Activated CD4-positive, alpha-beta T cell treated with anti-CD3 and anti-CD28 coated beads for 36 hours (primary cell): ENCODE measurements at regions of chr20 and their contacts with region 1.

Region 1: DNA sequence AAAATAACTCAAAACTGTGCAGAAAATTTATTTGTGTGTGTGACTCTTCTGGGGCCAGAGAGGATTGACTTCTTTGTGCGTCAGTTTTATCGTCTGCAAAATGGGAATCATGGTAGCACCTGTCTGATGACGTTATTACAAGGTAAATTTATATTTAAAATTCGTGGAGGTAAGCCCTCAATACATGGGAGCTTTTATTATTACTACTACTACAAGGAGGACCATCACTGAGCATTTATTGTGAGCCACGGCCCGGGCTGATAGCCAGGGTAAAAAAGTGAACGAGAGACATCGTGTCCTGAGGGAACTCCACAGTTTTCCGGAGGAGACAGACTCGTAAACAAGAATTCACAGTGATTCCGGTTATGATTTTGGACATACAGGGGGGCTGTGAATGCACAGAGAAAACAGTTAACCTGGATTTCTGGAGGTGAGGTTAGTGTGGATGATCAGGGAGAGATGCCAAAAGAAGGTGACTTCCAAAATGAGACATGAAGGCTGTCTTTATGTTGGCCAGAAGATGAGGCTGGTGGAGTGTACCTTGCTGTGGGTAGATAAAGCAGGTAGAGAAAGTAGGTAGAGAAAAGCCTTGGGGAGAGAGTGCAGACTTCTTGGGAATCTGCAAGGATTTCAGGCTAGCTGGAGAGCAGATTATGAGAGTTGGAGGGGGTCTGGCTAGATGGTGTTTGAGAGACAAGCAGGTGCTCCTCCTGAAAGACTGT is 10.6 kb upstream of the SERINC3 start:
- DNase-seq: no peak
- ATAC-seq: peak; percentile 31
- H3K4me3 Mint-ChIP-seq: no peak overlapping the region
- H3K27ac Mint-ChIP-seq: no peak overlapping the region
- H3K4me1 Mint-ChIP-seq: peaks cover 4% of the 10 kb centered on the region
- H3K27me3 Mint-ChIP-seq: no peaks in the 10 kb centered on the region

Region 2: DNA sequence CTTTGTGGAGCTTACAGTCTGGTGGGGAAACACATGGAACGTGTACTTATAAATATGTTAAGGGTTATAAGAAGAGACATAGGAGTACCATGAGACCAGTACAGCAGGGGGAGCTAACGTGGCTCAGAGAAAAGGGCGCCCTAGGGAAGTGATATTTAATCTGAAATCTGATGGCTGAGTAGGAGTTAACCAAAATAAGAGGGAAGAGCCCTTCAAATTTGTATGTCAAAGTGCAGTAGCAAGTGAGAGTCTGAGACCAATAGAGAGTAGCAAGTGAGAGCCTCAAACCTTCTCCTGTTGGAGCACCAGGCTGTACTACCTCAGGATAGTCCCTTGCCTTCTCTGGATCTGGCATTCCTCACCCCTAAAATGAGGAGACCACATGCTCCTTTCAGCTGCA is 43.9 kb after region 1 on chr20:
- CTCF ChIA-PET with region 1: no interaction called
- POLR2A ChIA-PET with region 1: no interaction called
- intact Hi-C with region 1: loop called in 1 of 2 experiments (anchors 2 kb)
- DNase-seq: peak; percentile 34
- ATAC-seq: peak; percentile 40
- H3K4me3 Mint-ChIP-seq: no peak overlapping the region
- H3K27ac Mint-ChIP-seq: no peak overlapping the region
- H3K4me1 Mint-ChIP-seq: peaks cover 17% of the 10 kb centered on the region
- H3K27me3 Mint-ChIP-seq: peaks cover 2% of the 10 kb centered on the region

Region 3: DNA sequence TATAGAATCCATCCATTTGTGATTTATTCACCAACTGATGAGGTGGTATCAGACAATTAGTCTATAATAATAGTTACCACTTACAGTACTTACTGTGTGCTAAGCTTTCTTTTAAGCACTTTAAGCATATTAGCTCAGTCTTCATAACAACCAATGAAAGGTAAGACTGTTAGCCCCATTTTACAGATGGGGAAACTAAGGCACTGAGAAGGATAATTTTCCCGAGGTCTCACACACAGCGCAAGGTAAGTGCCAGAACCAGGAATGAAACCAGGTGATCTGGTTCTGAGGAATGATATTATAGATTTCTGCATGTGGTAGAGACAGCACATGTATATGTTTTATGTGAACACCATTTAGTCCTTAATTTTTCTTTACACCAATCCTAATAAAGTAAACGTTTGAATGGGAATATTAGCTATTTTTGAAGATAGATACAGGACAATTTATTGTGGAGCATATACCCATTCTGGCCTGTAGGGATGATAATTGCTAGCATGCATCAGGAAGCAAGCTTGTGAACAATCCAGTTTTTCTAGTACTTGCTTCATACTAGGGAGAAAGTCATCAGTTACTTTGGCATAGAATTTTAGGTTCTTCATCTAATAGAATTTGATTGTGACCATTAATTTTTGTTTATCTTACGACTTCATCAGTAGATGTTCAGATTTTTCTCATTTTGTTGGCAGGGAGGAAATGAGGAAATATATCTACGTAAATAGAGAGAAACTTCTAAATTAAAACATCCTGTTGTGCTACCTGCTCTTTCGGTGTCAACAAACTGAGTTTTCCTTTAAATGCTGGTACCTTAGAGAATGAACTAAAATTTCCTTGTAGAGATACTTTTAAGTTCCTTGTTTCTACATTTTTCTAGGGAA is 356.0 kb after region 1 on chr20:
- CTCF ChIA-PET with region 1: no interaction called
- POLR2A ChIA-PET with region 1: no interaction called
- intact Hi-C with region 1: no loop called
- DNase-seq: no peak
- ATAC-seq: no peak
- H3K4me3 Mint-ChIP-seq: peak overlapping the region; percentile 94
- H3K27ac Mint-ChIP-seq: peak overlapping the region; percentile 83
- H3K4me1 Mint-ChIP-seq: peaks cover 66% of the 10 kb centered on the region
- H3K27me3 Mint-ChIP-seq: no peaks in the 10 kb centered on the region